CD8-positive, alpha-beta T cell (primary cell): ENCODE measurements at regions of chr7 and their contacts with region 1.

Region 1: GRCh38 chr7:30968747-30969603 is 5.2 kb downstream of the GHRHR start:
- DNase-seq: no peak
- ATAC-seq: no peak
- H3K4me3 ChIP-seq: no peak overlapping the region
- H3K4me3 Mint-ChIP-seq: no peak overlapping the region
- H3K27ac ChIP-seq: no peak overlapping the region
- H3K27ac Mint-ChIP-seq: no peak overlapping the region
- H3K4me1 ChIP-seq: no peaks in the 10 kb centered on the region
- H3K4me1 Mint-ChIP-seq: no peaks in the 10 kb centered on the region
- H3K27me3 ChIP-seq: no peaks in the 10 kb centered on the region
- H3K27me3 Mint-ChIP-seq: peaks cover 42% of the 10 kb centered on the region
- CTCF ChIP-seq: no peak

Region 2: DNA sequence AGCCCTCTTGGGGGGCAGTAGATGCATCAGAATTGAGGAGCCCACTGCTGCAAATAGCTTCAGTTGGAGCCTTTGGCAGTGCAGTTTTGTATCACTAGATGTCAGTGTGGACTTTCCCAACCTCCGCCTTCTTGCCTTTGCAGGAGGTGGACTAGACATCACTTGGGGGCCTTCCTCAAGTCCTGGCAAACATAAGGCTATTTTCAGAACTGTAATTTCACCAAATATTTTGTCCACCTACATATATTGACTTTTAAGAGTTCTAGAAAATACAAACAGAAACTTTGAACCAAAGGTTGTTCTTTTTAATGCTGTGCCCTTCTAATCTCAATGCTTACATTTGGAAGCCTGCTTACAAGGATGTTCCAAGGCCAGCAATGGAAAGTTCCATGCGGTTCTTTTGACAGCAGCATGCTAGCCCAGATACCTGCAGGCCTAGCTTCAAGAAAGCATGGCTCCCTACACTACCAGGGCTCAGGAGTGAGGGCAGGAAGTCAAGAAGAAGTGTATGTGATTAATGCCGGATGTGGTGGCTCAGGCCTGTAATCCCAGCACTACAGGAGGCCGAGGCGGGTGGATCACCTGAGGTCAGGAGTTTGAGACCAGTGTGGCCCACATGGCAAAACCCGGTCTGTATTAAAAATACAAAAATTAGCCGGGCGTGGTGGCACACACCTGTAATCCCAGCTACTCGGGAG is 692.6 kb before region 1 on chr7:
- CTCF ChIA-PET with region 1: no interaction called
- POLR2A ChIA-PET with region 1: no interaction called
- intact Hi-C with region 1: no loop called
- DNase-seq: peak; percentile 10 to 77 (median 55)
- ATAC-seq: peak; percentile 86
- H3K4me3 ChIP-seq: no peak overlapping the region
- H3K4me3 Mint-ChIP-seq: no peak overlapping the region
- H3K27ac ChIP-seq: no peak overlapping the region
- H3K27ac Mint-ChIP-seq: no peak overlapping the region
- H3K4me1 ChIP-seq: no peaks in the 10 kb centered on the region
- H3K4me1 Mint-ChIP-seq: peaks cover 9% of the 10 kb centered on the region
- H3K27me3 ChIP-seq: no peaks in the 10 kb centered on the region
- H3K27me3 Mint-ChIP-seq: no peaks in the 10 kb centered on the region
- CTCF ChIP-seq: peak; percentile 69

Region 3: DNA sequence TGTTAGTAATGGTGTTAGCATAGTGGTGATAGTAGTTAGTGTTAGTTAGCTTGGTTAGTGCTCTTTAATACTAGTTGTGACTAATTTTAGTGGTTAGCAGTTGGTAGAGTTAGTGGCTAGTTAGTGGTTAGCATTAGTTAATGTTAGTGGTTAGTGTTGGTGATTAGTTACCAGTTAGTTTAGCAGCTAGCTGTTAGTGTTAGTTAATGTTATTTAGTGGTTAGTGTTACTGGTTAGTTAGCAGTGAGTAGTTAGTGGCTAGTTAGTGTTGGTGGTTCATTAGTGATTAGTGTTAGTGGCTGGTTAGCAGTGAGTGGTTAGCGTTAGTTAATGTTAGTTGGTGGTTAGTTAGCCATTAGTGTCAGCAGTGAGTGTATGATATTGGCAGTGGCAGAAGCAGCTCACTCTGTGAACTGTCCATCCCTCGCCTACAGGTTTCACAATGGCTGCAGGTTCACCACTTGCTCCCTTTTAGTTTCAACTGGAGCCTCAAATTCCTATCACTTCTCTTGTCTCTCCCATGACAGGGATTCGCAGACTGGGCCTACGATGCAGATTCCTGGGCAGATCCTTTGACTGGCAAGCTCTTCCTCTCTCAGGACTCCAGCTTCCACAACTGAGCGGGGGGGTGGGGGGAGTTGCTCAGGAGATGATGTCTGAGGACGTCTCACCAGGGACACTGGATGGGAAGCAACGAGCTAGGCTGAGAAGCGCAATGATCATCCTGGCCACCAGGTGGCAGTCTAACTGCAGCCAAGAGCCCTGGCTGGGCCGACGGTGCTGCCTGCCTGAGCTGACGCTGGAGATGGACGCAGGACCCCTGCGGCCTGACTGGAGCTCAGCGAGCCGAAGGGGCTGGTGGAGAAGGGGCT is 14.3 kb after region 1 on chr7:
- CTCF ChIA-PET with region 1: interaction called, 53 read pairs
- POLR2A ChIA-PET with region 1: no interaction called
- intact Hi-C with region 1: no loop called
- DNase-seq: peak; percentile 44 to 81 (median 71)
- ATAC-seq: peak; percentile 57
- H3K4me3 ChIP-seq: no peak overlapping the region
- H3K4me3 Mint-ChIP-seq: no peak overlapping the region
- H3K27ac ChIP-seq: no peak overlapping the region
- H3K27ac Mint-ChIP-seq: no peak overlapping the region
- H3K4me1 ChIP-seq: no peaks in the 10 kb centered on the region
- H3K4me1 Mint-ChIP-seq: peaks cover 5% of the 10 kb centered on the region
- H3K27me3 ChIP-seq: peaks cover 4 to 6% of the 10 kb centered on the region in 2 experiments
- H3K27me3 Mint-ChIP-seq: peaks cover 51% of the 10 kb centered on the region
- CTCF ChIP-seq: peak; percentile 82